Left ventricle myocardium inferior (tissue), 1 donor: ENCODE measurements at regions of chr10 and their contacts with region 1.

Region 1: GRCh38 chr10:26810435-26811026 is 50.2 kb downstream of the ABI1 start:
- DNase-seq: no peak
- H3K4me3 ChIP-seq: no peak overlapping the region
- H3K27ac ChIP-seq: no peak overlapping the region
- H3K4me1 ChIP-seq: peaks cover 6% of the 10 kb centered on the region
- H3K27me3 ChIP-seq: no peaks in the 10 kb centered on the region
- CTCF ChIP-seq: no peak

Region 2: GRCh38 chr10:26765549-26765948 is 45.0 kb before region 1 on chr10:
- intact Hi-C with region 1: loop called (anchors 10 kb)
- DNase-seq: no peak
- H3K4me3 ChIP-seq: no peak overlapping the region
- H3K27ac ChIP-seq: no peak overlapping the region
- H3K4me1 ChIP-seq: no peaks in the 10 kb centered on the region
- H3K27me3 ChIP-seq: no peaks in the 10 kb centered on the region
- CTCF ChIP-seq: no peak